Lower lobe of right lung (tissue), 2 donors: ENCODE measurements at regions of chr4 and their contacts with region 1.

Region 1: DNA sequence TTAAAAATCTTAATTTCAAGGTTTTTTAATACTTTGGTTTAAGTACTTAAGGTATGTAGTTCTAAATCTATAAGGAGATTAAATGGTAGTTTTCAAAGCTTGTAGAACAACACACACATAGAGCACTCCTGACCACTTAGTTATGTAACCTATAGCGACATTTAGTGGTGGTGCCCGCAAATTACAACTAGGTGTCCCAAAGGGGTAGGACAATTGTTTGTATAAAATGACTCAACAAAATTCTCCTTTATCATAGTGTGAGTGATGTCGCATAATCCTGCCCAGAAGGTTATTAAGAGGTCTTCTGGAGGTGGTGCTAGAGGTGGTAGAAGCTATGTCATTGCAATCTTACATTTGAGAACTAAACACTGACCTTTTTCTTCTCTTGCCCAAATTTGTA is 373.0 kb upstream of the RASGEF1B start:
- DNase-seq: peak; percentile 61
- ATAC-seq: peak; percentile 91 to 96
- H3K4me3 ChIP-seq: no peak overlapping the region
- H3K27ac ChIP-seq: no peak overlapping the region
- H3K4me1 ChIP-seq: no peaks in the 10 kb centered on the region
- H3K27me3 ChIP-seq: no peaks in the 10 kb centered on the region
- CTCF ChIP-seq: peak; percentile 84

Region 2: DNA sequence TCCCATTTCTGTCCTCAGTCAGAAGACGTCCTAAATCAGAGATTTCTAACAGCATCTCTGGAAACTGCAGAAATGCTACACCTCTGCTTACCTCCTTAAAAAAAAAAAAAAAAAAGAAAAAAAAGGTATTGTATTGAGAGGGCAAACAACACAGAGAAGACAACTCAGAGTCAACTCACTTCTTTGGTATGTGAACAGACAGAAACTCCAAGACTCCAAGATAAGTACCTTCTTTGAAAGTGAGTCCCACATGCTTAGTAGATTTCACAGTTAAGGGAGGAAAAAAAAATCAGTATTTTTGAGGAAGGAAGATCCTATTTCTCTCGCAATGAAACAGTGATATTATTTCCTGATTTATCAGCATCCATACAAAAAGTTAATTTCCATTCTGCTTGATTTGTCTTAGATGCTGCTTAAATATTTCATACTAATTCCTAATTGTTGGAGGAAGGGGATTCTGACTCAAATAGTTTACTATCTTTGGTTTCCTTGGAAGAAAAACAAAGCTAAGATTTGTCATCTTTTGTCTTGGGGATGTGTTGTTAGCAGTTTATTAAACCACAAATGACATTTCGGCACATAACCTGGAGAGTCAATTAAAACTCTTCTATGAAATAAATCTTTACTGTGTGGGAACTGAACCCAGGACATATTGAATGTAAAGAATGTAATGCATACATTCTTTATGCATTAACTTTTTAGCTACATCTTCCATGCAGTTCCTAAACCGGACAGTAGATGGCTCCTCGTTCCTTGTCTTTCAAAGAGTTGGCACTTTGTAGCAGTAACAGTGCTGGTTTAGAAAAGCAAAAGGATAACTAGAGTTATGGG is 377.7 kb before region 1 on chr4:
- intact Hi-C with region 1: loop called (anchors 5 kb)
- DNase-seq: no peak
- ATAC-seq: no peak
- H3K4me3 ChIP-seq: peak overlapping the region; percentile 4
- H3K27ac ChIP-seq: no peak overlapping the region
- H3K4me1 ChIP-seq: peaks cover 60% of the 10 kb centered on the region
- H3K27me3 ChIP-seq: no peaks in the 10 kb centered on the region
- CTCF ChIP-seq: peak; percentile 92

Region 3: GRCh38 chr4:81724925-81725329 is 119.8 kb before region 1 on chr4:
- intact Hi-C with region 1: no loop called
- DNase-seq: peak; percentile 73
- ATAC-seq: peak; percentile 89 to 93
- H3K4me3 ChIP-seq: no peak overlapping the region
- H3K27ac ChIP-seq: peak overlapping the region; percentile 9
- H3K4me1 ChIP-seq: peaks cover 34% of the 10 kb centered on the region
- H3K27me3 ChIP-seq: no peaks in the 10 kb centered on the region
- CTCF ChIP-seq: no peak